ENCODE measurements at regions of chr1 and their contacts with region 1.

Region 1: GRCh38 chr1:66350001-66350547 is 183.9 kb upstream of the SGIP1 start:
- DNase-seq: peak; percentile 83
- ATAC-seq: peak; percentile 74
- H3K4me3 Mint-ChIP-seq: peak overlapping the region; percentile 70
- H3K27ac Mint-ChIP-seq: peak overlapping the region; percentile 81
- H3K4me1 Mint-ChIP-seq: peaks cover 96% of the 10 kb centered on the region
- H3K27me3 Mint-ChIP-seq: no peaks in the 10 kb centered on the region
- CTCF ChIP-seq: no peak

Region 2: GRCh38 chr1:66253330-66253921 is 96.6 kb before region 1 on chr1:
- CTCF ChIA-PET with region 1: interaction called, 36 read pairs
- POLR2A ChIA-PET with region 1: interaction called, 7 read pairs
- intact Hi-C with region 1: no loop called
- DNase-seq: no peak
- ATAC-seq: peak; percentile 89
- H3K4me3 Mint-ChIP-seq: no peak overlapping the region
- H3K27ac Mint-ChIP-seq: no peak overlapping the region
- H3K4me1 Mint-ChIP-seq: peaks cover 46% of the 10 kb centered on the region
- H3K27me3 Mint-ChIP-seq: peaks cover 1% of the 10 kb centered on the region
- CTCF ChIP-seq: peak; percentile 83

Region 3: GRCh38 chr1:66271216-66271903 is 78.7 kb before region 1 on chr1:
- CTCF ChIA-PET with region 1: interaction called, 4 read pairs
- POLR2A ChIA-PET with region 1: interaction called, 5 read pairs
- intact Hi-C with region 1: loop called (anchors 5 kb)
- DNase-seq: peak; percentile 80
- ATAC-seq: peak; percentile 63
- H3K4me3 Mint-ChIP-seq: no peak overlapping the region
- H3K27ac Mint-ChIP-seq: peak overlapping the region; percentile 86
- H3K4me1 Mint-ChIP-seq: peaks cover 65% of the 10 kb centered on the region
- H3K27me3 Mint-ChIP-seq: no peaks in the 10 kb centered on the region
- CTCF ChIP-seq: no peak

Region 4: GRCh38 chr1:66339944-66340343 is 10.1 kb before region 1 on chr1:
- CTCF ChIA-PET with region 1: interaction called, 10 read pairs
- POLR2A ChIA-PET with region 1: interaction called, 63 read pairs
- intact Hi-C with region 1: loop called (anchors 2 kb)
- DNase-seq: no peak
- ATAC-seq: no peak
- H3K4me3 Mint-ChIP-seq: peak overlapping the region; percentile 68
- H3K27ac Mint-ChIP-seq: peak overlapping the region; percentile 89
- H3K4me1 Mint-ChIP-seq: peaks cover 70% of the 10 kb centered on the region
- H3K27me3 Mint-ChIP-seq: no peaks in the 10 kb centered on the region
- CTCF ChIP-seq: no peak

Region 5: GRCh38 chr1:66360285-66360724 is 10.2 kb after region 1 on chr1:
- CTCF ChIA-PET with region 1: interaction called, 59 read pairs
- POLR2A ChIA-PET with region 1: interaction called, 35 read pairs
- intact Hi-C with region 1: no loop called
- DNase-seq: peak; percentile 22
- ATAC-seq: peak; percentile 41
- H3K4me3 Mint-ChIP-seq: no peak overlapping the region
- H3K27ac Mint-ChIP-seq: no peak overlapping the region
- H3K4me1 Mint-ChIP-seq: peaks cover 88% of the 10 kb centered on the region
- H3K27me3 Mint-ChIP-seq: no peaks in the 10 kb centered on the region
- CTCF ChIP-seq: peak; percentile 79

Region 6: GRCh38 chr1:66374561-66375111 is 24.6 kb after region 1 on chr1:
- CTCF ChIA-PET with region 1: interaction called, 49 read pairs
- POLR2A ChIA-PET with region 1: interaction called, 15 read pairs
- intact Hi-C with region 1: no loop called
- DNase-seq: peak; percentile 76
- ATAC-seq: peak; percentile 75
- H3K4me3 Mint-ChIP-seq: peak overlapping the region; percentile 60
- H3K27ac Mint-ChIP-seq: peak overlapping the region; percentile 93
- H3K4me1 Mint-ChIP-seq: peaks cover 75% of the 10 kb centered on the region
- H3K27me3 Mint-ChIP-seq: no peaks in the 10 kb centered on the region
- CTCF ChIP-seq: no peak

Region 7: DNA sequence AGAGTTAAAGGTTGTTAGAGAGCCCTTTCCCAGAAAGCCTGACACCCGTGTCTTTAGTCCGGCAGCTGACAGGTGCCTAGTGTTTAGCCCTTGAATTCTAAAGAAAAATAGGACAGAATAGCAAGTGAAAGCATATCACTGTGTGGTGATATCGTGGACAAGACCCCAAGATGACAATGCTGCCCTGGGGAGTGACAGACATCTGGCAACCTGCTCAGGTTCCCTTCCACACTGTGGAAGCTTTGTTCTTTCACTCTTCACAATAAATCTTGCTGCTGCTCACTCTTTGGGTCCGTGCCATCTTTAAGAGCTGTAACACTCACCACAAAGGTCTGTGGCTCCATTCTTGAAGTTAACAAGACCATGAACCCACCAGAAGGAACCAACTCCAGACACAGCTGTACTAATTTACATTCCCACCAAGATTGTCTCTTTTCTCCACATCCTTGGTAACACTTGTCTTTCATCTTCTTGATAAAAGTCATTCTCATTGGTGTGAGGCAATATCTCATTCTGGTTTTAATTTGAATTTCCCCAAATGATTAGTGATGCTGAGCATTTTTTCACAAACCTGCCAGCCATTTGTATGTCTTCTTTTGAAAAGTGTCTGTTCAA is 76.3 kb after region 1 on chr1:
- CTCF ChIA-PET with region 1: no interaction called
- POLR2A ChIA-PET with region 1: no interaction called
- intact Hi-C with region 1: no loop called
- DNase-seq: no peak
- ATAC-seq: peak; percentile 37
- H3K4me3 Mint-ChIP-seq: no peak overlapping the region
- H3K27ac Mint-ChIP-seq: no peak overlapping the region
- H3K4me1 Mint-ChIP-seq: peaks cover 7% of the 10 kb centered on the region
- H3K27me3 Mint-ChIP-seq: no peaks in the 10 kb centered on the region
- CTCF ChIP-seq: no peak

Measured in activated CD8-positive, alpha-beta T cell treated with anti-CD3 and anti-CD28 coated beads for 36 hours (primary cell).